ENCODE measurements at regions of chr19 and their contacts with region 1.

Region 1: DNA sequence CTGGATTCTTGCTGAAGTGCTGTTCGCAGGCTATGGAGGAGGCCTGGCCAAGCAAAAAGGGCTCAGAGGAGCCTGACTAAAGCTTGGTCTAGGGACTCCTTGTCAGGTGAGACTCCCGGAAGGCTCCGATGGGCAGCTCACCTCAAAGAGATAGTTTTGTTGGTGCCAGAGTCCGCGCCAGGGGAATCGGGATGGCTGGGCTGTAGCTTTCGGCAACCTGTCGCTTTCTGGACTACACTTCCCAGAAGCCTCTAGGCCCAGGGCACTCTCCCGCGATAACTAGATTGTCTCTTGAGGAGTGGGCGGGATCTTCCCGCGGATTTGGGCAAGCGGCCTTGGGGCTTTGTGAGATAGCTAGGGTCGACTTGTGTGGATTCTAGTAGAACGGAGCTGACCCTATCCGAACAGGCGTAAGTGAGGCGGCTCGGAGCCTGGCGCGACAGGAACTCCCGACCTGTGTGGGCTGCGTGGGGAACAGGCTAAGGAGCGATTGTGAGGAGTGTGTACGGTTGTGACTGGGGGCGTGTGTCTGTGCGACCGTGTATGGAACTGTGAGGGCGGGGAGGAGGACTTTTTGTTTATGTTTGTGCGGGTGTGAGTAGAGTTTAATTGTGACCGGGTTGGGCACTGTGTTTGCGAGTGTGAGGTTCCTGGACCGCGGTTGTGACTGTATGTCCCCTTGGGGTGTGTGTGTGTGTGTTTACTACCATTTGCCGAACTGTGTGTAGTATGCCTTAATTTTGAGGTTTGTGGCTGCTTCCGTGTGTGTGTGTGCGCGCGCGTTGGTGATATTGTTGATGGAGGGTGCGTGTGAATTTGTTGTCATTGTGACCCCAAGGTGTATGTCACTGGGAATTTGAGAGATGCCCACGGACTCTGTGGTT is at the start of gene ZNF345:
- DNase-seq: peak; percentile 92
- ATAC-seq: peak; percentile 86
- H3K4me3 Mint-ChIP-seq: no peak within 1 kb of the TSS
- H3K27ac Mint-ChIP-seq: no peak within 1 kb of the TSS
- H3K4me1 Mint-ChIP-seq: peaks cover 5% of the 10 kb centered on the region
- H3K27me3 Mint-ChIP-seq: no peaks in the 10 kb centered on the region
- total RNA-seq, gene ZNF345: 4.6 to 4.9 TPM

Region 2: DNA sequence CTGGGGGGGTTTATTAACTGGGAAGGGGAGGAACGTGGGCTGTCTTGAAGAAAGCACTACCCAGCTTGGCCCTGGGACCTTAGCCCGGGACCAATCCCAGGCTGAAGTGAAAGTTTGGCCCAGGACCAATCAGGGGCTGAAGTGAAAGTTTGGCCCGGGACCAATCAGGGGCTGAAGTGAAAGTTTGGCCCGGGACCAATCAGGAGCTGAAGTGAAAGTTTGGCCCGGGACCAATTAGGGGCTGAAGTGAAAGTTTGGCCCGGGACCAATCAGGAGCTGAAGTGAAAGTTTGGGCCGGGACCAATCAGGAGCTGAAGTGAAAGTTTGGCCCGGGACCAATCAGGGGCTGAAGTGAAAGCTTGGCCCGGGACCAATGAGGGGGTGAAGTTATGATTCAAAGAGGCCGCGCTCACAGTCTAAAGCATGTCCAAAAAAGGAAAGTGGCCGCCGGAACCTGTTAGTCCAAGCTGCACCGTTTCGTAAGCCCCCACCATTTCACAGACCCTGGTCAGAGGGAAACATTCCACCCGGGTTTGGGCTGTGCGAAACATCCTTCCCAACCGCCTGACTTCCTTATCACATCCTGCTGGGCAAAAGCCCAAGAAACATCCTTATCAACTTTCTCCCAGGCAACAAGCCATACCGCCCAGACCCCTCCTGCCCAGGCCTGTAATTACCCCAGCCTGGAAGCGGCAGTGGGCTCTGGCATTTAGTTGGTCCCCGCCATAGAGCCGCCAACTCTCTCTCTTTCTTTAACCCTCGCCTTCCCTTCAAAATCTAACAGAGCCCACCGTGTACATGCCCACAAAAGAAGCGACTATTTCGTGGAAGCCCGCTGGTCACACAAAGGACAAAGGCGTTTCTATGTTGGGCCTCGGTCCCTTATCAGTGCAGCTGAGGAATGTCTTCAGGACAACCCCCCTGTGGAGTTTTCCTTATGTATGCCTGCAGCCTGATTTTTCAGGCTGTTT is 79.3 kb before region 1 on chr19:
- CTCF ChIA-PET with region 1: no interaction called
- POLR2A ChIA-PET with region 1: interaction called, 10 read pairs
- DNase-seq: peak; percentile 77
- ATAC-seq: peak; percentile 48
- H3K4me3 Mint-ChIP-seq: peak overlapping the region; percentile 94
- H3K27ac Mint-ChIP-seq: peak overlapping the region; percentile 96
- H3K4me1 Mint-ChIP-seq: peaks cover 22% of the 10 kb centered on the region
- H3K27me3 Mint-ChIP-seq: no peaks in the 10 kb centered on the region

Region 3: DNA sequence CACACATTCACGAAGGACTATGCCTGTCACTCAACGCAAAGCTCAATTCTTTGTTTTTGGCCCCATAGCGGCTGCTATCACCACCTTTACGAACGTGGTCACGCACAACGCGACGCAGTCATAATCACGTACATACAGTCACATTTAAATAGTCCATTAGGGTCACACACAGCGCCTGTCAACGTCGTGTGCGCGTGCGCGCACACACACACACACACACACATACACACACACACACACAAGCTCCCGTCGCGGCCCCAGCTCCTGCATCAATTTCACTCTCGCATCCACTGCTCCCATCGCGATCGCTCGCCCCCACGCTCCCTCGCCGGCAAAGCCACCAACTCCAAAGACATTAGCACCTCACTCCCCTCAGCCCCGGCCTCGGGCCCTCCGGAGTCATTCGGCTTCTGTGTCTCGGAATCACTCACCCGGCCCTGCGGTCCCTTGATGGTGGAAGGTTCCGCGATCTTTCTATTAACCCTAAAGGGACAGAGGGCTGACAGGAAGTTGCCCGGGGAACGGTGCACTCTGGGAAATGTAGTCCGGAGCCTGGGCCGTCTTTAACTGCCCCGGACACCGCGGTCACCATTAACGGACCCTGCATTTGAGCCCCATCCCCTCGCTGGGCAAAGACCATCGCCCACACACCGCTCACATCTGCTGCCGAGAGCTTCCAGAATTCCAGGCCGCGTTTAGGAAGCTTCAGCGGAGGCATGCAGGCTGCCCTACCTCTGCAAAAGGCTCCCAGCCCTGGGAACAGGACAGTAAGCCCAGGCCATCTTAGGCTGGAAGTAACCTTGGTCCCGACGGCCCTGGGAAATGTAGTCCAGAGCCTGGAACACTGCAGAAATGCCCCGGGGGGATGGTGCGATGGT is 12.7 kb before region 1 on chr19 and contains the start of gene ZNF790:
- CTCF ChIA-PET with region 1: interaction called, 26 read pairs
- POLR2A ChIA-PET with region 1: interaction called, 93 read pairs
- DNase-seq: peak; percentile 90
- ATAC-seq: peak; percentile 94
- H3K4me3 Mint-ChIP-seq: no peak within 1 kb of the TSS
- H3K27ac Mint-ChIP-seq: peak within 1 kb of the TSS; percentile 58
- H3K4me1 Mint-ChIP-seq: peaks cover 3% of the 10 kb centered on the region
- H3K27me3 Mint-ChIP-seq: no peaks in the 10 kb centered on the region
- total RNA-seq, gene ZNF790: 8.0 to 9.5 TPM

Region 4: GRCh38 chr19:36915992-36916830 is 65.4 kb after region 1 on chr19 and contains the starts of genes ZNF568 and ZNF829:
- CTCF ChIA-PET with region 1: no interaction called
- POLR2A ChIA-PET with region 1: interaction called, 10 read pairs
- DNase-seq: peak; percentile 96
- ATAC-seq: peak; percentile 99
- H3K4me3 Mint-ChIP-seq: peak within 1 kb of the TSS; percentile 84
- H3K27ac Mint-ChIP-seq: peak within 1 kb of the TSS; percentile 97
- H3K4me1 Mint-ChIP-seq: peaks cover 29% of the 10 kb centered on the region
- H3K27me3 Mint-ChIP-seq: no peaks in the 10 kb centered on the region
- total RNA-seq, gene ZNF568: 7.0 to 8.0 TPM
- total RNA-seq, gene ZNF829: 5.7 to 6.0 TPM

Region 5: DNA sequence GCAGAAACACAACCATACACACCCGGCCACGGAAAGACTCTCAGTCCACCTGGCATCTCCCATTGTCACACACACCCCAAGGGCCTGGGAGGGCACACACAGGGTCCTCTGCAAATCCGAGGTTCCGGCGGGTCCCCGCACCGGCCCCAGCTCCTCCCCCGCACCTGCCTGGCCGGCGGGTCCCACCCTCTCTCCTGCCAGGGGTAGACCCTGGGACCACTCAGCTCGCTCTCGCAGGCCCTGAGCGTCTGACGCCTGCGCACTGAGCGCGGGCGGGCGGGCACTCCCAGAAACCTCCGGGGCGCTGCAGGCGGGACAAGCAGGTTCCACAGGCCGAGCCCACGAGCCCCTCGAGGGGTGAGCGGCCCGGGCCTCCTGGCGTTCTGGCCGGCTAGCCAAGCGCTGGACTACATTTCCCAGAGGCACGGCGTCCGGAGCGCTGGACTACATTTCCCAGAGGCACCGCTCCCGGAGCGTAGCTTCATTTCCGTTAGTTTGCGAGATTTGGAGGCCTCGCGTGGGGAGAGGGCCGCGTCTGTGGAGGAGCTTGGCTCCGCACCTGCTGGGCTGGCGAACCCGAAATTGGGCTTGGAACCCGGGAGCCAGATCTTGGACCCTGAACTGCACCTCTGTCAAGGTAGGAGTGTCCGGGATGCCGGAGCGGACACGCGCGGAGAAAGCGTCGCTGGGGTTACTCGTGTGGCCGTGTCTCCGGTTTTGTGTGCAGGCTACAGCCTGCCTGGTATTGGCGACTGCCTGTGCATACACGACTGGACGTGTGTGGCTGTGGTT is 227.3 kb after region 1 on chr19 and contains the start of gene ZNF420:
- CTCF ChIA-PET with region 1: no interaction called
- POLR2A ChIA-PET with region 1: interaction called, 13 read pairs
- DNase-seq: peak; percentile 95
- ATAC-seq: peak; percentile 97
- H3K4me3 Mint-ChIP-seq: peak within 1 kb of the TSS; percentile 87
- H3K27ac Mint-ChIP-seq: peak within 1 kb of the TSS; percentile 94
- H3K4me1 Mint-ChIP-seq: peaks cover 27% of the 10 kb centered on the region
- H3K27me3 Mint-ChIP-seq: no peaks in the 10 kb centered on the region
- total RNA-seq, gene ZNF420: 10.3 to 11.6 TPM

Region 6: GRCh38 chr19:37217855-37218591 is 367.2 kb after region 1 on chr19 and contains the start of gene ZNF383:
- CTCF ChIA-PET with region 1: no interaction called
- POLR2A ChIA-PET with region 1: interaction called, 13 read pairs
- DNase-seq: peak; percentile 90
- ATAC-seq: peak; percentile 92
- H3K4me3 Mint-ChIP-seq: peak within 1 kb of the TSS; percentile 91
- H3K27ac Mint-ChIP-seq: peak within 1 kb of the TSS; percentile 95
- H3K4me1 Mint-ChIP-seq: peaks cover 24% of the 10 kb centered on the region
- H3K27me3 Mint-ChIP-seq: no peaks in the 10 kb centered on the region
- total RNA-seq, gene ZNF383: 10.5 to 11.2 TPM